PC-9 (cell line): ENCODE measurements at regions of chr10 and their contacts with region 1.

Region 1: GRCh38 chr10:114779803-114780609 is 41.6 kb upstream of the FHIP2A start:
- DNase-seq: peak in 1 of 2 experiments; percentile 81
- H3K4me3 ChIP-seq: no peak overlapping the region
- H3K27ac ChIP-seq: peak overlapping the region; percentile 74
- H3K4me1 ChIP-seq: peaks cover 22% of the 10 kb centered on the region
- H3K27me3 ChIP-seq: no peaks in the 10 kb centered on the region
- CTCF ChIP-seq: no peak

Region 2: GRCh38 chr10:114623661-114624294 is 156.2 kb before region 1 on chr10:
- CTCF ChIA-PET with region 1: no interaction called
- POLR2A ChIA-PET with region 1: no interaction called
- intact Hi-C with region 1: loop called (anchors 5 kb)
- DNase-seq: peak; percentile 52 to 96
- H3K4me3 ChIP-seq: no peak overlapping the region
- H3K27ac ChIP-seq: peak overlapping the region; percentile 91
- H3K4me1 ChIP-seq: peaks cover 62% of the 10 kb centered on the region
- H3K27me3 ChIP-seq: no peaks in the 10 kb centered on the region
- CTCF ChIP-seq: no peak

Region 3: DNA sequence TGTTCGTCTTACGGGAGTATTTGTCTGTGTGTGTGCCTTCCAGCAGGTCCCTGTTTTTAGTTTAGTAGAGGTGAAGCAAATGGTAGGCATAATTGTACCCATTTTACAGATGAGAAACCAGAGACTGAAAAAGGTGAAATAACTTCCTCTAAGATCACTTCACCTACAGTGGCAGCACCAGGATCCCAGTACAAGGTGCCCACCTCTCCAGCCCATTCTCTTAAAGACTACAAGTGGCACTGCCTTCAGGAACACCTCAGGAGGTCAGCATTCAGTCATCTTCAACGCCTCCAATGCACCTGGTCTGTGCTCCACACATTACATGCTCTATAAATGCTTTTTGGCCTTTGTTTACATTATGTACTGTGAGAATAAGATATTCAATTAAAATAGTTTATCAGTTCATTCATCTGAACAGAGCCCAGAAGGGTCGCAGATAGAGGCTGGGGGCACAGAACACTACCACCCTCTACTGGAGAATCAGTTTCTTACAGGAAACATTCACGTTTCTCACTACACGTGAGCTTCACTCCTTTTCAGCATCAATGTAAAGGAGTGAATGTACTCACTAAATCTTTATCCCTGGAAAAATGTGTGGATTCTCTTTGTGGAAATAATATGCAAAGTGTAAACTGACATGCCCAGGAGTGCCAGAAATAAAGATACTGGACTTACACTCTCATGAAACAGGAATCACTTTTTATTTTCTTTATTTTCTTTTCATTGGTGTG is 76.5 kb before region 1 on chr10:
- CTCF ChIA-PET with region 1: interaction called, 3 read pairs
- POLR2A ChIA-PET with region 1: no interaction called
- intact Hi-C with region 1: loop called (anchors 5 kb)
- DNase-seq: no peak
- H3K4me3 ChIP-seq: no peak overlapping the region
- H3K27ac ChIP-seq: no peak overlapping the region
- H3K4me1 ChIP-seq: peaks cover 24% of the 10 kb centered on the region
- H3K27me3 ChIP-seq: no peaks in the 10 kb centered on the region
- CTCF ChIP-seq: peak; percentile 67

Region 4: GRCh38 chr10:114767101-114767985 is 12.7 kb before region 1 on chr10:
- CTCF ChIA-PET with region 1: interaction called, 14 read pairs
- POLR2A ChIA-PET with region 1: interaction called, 3 read pairs
- intact Hi-C with region 1: no loop called
- DNase-seq: no peak
- H3K4me3 ChIP-seq: peak overlapping the region; percentile 71
- H3K27ac ChIP-seq: no peak overlapping the region
- H3K4me1 ChIP-seq: peaks cover 16% of the 10 kb centered on the region
- H3K27me3 ChIP-seq: no peaks in the 10 kb centered on the region
- CTCF ChIP-seq: no peak

Region 5: GRCh38 chr10:114821293-114821914 is 41.4 kb after region 1 on chr10 and contains the start of gene FHIP2A:
- CTCF ChIA-PET with region 1: no interaction called
- POLR2A ChIA-PET with region 1: no interaction called
- intact Hi-C with region 1: loop called (anchors 2 kb)
- DNase-seq: peak in 1 of 2 experiments; percentile 75
- H3K4me3 ChIP-seq: peak within 1 kb of the TSS; percentile 82
- H3K27ac ChIP-seq: peak within 1 kb of the TSS; percentile 97
- H3K4me1 ChIP-seq: peaks cover 29% of the 10 kb centered on the region
- H3K27me3 ChIP-seq: no peaks in the 10 kb centered on the region
- CTCF ChIP-seq: 0 out of 2 replicates have a peak, but pooled peaks have one; percentile 24
- total RNA-seq, gene FHIP2A: 16.0 and 18.3 TPM in 2 replicates

Region 6: DNA sequence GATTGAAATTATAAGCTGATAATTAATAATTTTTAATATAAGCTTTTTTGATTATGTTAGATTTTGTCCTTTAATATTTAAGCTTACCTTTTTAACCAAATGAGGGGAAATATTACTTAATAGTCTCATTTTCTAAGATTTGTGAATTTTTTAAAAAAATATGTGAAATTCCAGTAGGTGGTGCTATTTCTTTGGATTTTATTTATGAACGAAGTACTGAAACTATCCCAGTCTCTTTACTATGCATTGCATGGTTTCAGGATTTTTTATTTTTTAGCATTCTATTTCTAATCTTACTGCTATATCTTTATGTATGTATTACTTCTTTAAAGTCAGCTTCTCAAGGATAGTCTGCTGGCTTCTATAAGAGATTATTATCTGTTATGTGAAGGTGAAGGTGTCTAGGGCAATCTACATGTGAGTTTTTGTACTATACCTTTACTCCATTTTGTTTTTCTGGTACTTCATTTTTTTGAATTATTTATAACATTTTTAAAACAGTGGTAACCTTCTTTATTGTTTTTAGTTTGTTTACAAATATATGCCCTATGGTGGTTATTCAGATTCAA is 391.5 kb after region 1 on chr10:
- CTCF ChIA-PET with region 1: no interaction called
- POLR2A ChIA-PET with region 1: no interaction called
- intact Hi-C with region 1: no loop called
- DNase-seq: no peak
- H3K4me3 ChIP-seq: no peak overlapping the region
- H3K27ac ChIP-seq: no peak overlapping the region
- H3K4me1 ChIP-seq: no peaks in the 10 kb centered on the region
- H3K27me3 ChIP-seq: no peaks in the 10 kb centered on the region
- CTCF ChIP-seq: peak; percentile 62